ENCODE measurements at regions of chr5 and their contacts with region 1.

Region 1: GRCh38 chr5:132883261-132883834 is 9.9 kb downstream of the LEAP2 start:
- DNase-seq: peak; percentile 82
- H3K4me3 ChIP-seq: no peak overlapping the region
- H3K27ac ChIP-seq: no peak overlapping the region
- H3K4me1 ChIP-seq: peaks cover 6% of the 10 kb centered on the region
- H3K27me3 ChIP-seq: no peaks in the 10 kb centered on the region
- CTCF ChIP-seq: peak; percentile 66 to 69
- POLR2A ChIP-seq: no peak

Region 2: GRCh38 chr5:132746954-132747615 is 136.3 kb before region 1 on chr5 and contains the start of gene CCNI2:
- CTCF ChIA-PET with region 1: interaction called, 4 read pairs
- POLR2A ChIA-PET with region 1: no interaction called
- dilution Hi-C with region 1: no loop called
- intact Hi-C with region 1: loop called (anchors 5 kb)
- DNase-seq: peak; percentile 50
- H3K4me3 ChIP-seq: peak within 1 kb of the TSS; percentile 32 to 34 (median 34)
- H3K27ac ChIP-seq: no peak within 1 kb of the TSS
- H3K4me1 ChIP-seq: peaks cover 5% of the 10 kb centered on the region
- H3K27me3 ChIP-seq: peaks cover 2 to 5% of the 10 kb centered on the region in 2 experiments
- CTCF ChIP-seq: peak; percentile 28 to 38
- POLR2A ChIP-seq: no peak
- total RNA-seq, gene CCNI2: 0.53 TPM in 1 of 2 replicates, not detected in the other

Region 3: GRCh38 chr5:132829742-132830435 is 53.5 kb before region 1 on chr5:
- CTCF ChIA-PET with region 1: interaction called, 122 read pairs
- POLR2A ChIA-PET with region 1: no interaction called
- dilution Hi-C with region 1: no loop called
- intact Hi-C with region 1: loop called (anchors 1 kb)
- DNase-seq: peak; percentile 75
- H3K4me3 ChIP-seq: peak overlapping the region; percentile 41 to 59 (median 49)
- H3K27ac ChIP-seq: peak overlapping the region; percentile 32
- H3K4me1 ChIP-seq: peaks cover 12% of the 10 kb centered on the region
- H3K27me3 ChIP-seq: no peaks in the 10 kb centered on the region
- CTCF ChIP-seq: peak; percentile 92 to 99
- POLR2A ChIP-seq: peak; percentile 28

Region 4: GRCh38 chr5:132873119-132873929 is 10.0 kb before region 1 on chr5 and contains the start of gene LEAP2:
- CTCF ChIA-PET with region 1: interaction called, 16 read pairs
- POLR2A ChIA-PET with region 1: interaction called, 6 read pairs
- dilution Hi-C with region 1: no loop called
- intact Hi-C with region 1: no loop called
- DNase-seq: no peak
- H3K4me3 ChIP-seq: no peak within 1 kb of the TSS
- H3K27ac ChIP-seq: no peak within 1 kb of the TSS
- H3K4me1 ChIP-seq: no peaks in the 10 kb centered on the region
- H3K27me3 ChIP-seq: no peaks in the 10 kb centered on the region
- CTCF ChIP-seq: no peak
- POLR2A ChIP-seq: no peak
- total RNA-seq, gene LEAP2: 0.40 and 0.99 TPM in 2 replicates

Region 5: DNA sequence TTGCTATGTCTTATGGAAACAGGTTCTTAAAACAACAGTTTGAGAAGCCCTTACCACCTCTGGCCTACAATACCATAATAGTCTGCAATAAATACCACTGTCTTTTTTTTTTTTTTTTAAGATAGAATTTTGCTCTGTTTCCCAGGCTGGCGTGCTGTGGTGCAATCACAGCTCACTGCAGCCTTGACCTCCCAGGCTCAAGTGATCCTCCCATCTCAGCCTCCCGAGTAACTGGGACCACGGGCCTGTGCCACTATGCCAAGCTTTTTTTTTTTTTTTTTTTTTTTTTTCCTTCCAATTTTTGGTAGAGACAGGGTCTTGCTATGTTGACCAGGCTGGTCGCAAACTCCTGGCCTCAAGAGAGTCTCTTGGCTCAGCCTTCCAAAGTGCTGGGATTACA is 43.1 kb after region 1 on chr5:
- CTCF ChIA-PET with region 1: no interaction called
- POLR2A ChIA-PET with region 1: no interaction called
- dilution Hi-C with region 1: no loop called
- intact Hi-C with region 1: no loop called
- DNase-seq: no peak
- H3K4me3 ChIP-seq: no peak overlapping the region
- H3K27ac ChIP-seq: no peak overlapping the region
- H3K4me1 ChIP-seq: no peaks in the 10 kb centered on the region
- H3K27me3 ChIP-seq: no peaks in the 10 kb centered on the region
- CTCF ChIP-seq: no peak
- POLR2A ChIP-seq: no peak

Measured in endothelial cell of umbilical vein (primary cell).